Body of pancreas (tissue), 4 donors: ENCODE measurements at regions of chr7 and their contacts with region 1.

Region 1: GRCh38 chr7:54729107-54729506 is 29.9 kb downstream of the SEC61G start:
- DNase-seq: no peak
- ATAC-seq: no peak
- H3K4me3 ChIP-seq: no peak overlapping the region
- H3K27ac ChIP-seq: no peak overlapping the region
- H3K4me1 ChIP-seq: no peaks in the 10 kb centered on the region
- H3K27me3 ChIP-seq: no peaks in the 10 kb centered on the region
- CTCF ChIP-seq: no peak
- POLR2A ChIP-seq: no peak

Region 2: DNA sequence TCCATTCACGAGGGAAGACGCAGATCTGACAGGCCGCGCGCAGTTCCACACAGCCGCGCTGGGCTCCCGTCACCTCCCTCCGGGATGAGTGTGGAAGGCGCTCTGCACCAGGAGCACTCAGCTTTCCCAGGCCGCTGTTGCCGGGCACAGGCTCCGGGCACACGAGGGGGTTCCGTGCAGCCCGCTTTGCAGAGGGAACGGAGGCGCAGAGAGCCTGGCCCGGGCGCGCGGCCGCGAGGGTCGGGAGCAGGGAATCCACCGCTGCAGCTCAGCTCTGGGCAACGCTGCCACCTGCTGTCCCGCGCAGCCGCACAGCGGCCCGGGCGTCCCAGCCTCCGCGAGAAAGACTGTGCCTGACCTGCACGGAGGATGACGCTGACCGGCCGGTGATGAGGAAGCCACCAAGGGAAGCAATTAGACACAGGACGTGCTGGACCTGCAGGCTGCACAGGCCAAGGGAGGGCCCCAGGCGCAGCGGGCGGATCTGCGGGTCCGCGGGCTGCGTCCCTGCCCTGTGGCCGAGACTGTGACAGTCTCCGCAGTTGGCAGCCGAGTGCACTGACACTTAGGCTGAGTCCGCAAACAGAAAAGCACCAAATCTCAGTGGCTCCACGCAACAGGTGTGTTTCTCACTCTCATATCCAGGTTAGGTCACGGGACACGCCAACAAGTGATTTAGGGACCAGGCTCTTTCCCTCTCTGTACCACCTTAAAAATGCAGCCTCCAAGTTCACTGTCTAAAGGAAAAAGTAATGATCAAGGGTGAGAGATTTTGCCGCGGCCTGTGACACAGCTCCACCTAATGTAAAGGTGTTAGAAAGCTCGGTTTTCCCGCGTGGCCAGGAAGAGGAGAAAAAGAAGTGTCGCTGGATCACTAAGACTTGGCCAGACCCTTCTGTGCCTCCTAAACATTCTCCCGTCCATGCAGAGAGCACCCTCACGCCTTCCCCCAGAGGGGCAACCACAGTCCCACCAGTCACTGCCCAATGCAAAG is 64.6 kb before region 1 on chr7:
- intact Hi-C with region 1: loop called (anchors 10 kb)
- DNase-seq: peak; percentile 55 to 73 (median 59)
- ATAC-seq: peak; percentile 88
- H3K4me3 ChIP-seq: no peak overlapping the region
- H3K27ac ChIP-seq: no peak overlapping the region
- H3K4me1 ChIP-seq: peaks cover 11% of the 10 kb centered on the region
- H3K27me3 ChIP-seq: no peaks in the 10 kb centered on the region
- CTCF ChIP-seq: peak in 5 of 7 experiments; percentile 26 to 58 (median 38)
- POLR2A ChIP-seq: no peak

Region 3: DNA sequence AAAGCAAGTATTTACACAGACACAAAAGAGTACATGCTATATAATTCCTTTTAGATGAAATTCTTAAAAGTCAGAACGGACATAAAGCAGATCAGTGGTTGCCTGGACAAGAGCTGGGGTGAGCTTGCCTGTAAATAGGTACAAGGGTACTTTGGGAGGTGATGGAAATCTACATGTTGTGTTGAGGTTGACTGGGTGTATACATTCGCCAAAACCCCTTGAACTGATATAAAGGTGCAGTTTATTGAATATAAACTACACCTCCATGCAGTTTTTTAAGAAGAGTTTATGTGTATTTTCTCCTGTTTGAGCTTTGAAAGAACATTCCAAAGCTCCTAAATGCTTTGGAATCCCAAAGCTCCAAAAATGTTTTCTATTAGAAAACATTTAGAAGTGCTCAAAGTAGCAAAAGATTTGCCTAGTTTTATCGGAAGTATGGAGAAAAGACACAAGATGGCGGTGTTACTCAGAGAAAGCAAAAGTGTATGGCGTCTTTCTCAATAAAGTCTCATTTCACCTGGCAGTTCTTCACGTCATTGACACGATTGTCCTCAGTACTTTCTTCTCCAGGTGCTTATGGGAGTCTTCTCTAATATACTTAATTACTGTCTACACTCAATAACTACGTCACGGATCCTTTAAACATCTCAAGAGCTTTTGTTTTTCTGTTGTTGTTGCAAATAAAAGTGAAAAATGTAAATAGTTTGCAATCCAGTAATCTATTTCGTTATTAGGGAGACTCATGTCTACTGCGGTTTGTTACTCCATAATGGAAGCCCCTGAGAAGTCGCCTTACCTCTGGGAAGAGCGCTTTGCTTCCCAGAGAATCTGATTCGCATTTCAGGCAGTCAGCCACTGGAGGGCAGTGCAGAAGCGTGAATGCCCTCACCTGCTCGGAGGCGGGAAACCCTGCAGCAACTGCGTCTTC is 44.6 kb after region 1 on chr7:
- intact Hi-C with region 1: no loop called
- DNase-seq: peak; percentile 89 to 92 (median 89)
- ATAC-seq: peak; percentile 99
- H3K4me3 ChIP-seq: no peak overlapping the region
- H3K27ac ChIP-seq: peak overlapping the region in 3 of 4 donors; percentile 35 to 59 (median 53)
- H3K4me1 ChIP-seq: peaks cover 5% of the 10 kb centered on the region
- H3K27me3 ChIP-seq: no peaks in the 10 kb centered on the region
- CTCF ChIP-seq: peak; percentile 59 to 94 (median 89)
- POLR2A ChIP-seq: peak in 1 of 3 donors; percentile 16

Region 4: DNA sequence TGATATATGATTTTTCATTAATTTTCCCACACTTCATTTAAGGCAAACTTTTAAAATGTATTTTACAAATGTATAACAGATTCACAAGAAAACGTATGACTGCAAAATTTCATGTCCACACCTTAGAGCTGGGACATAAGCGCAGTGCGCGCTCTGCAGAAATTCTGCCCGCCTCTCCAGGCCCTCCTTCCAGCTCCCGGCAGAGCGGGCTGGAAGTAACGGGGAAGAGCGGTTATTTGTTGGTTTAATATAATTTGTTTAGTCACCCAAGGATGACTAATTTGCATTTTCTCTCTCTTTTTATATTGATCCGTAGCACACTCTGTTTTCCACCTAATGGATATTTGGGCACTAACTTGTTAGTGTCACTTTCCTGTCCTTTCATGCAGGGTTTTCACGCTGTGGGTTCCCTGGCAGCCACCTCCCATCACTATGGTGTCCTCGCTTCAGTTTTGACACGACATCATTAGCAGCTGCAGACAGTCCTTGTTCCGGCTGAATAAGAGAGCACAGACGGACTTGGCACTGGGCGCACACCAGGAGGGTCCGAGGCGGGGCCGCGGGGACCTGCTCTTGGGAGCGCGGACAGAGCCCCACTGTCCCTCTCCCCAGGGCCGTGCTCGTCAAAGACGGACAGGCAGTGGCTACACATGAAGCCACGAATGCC is 159.1 kb after region 1 on chr7:
- intact Hi-C with region 1: no loop called
- DNase-seq: no peak
- ATAC-seq: no peak
- H3K4me3 ChIP-seq: no peak overlapping the region
- H3K27ac ChIP-seq: no peak overlapping the region
- H3K4me1 ChIP-seq: no peaks in the 10 kb centered on the region
- H3K27me3 ChIP-seq: no peaks in the 10 kb centered on the region
- CTCF ChIP-seq: no peak
- POLR2A ChIP-seq: no peak